AG04449 (cell line): ENCODE measurements at regions of chr6 and their contacts with region 1.

Region 1: GRCh38 chr6:44074439-44075136 is 52.7 kb downstream of the MRPL14 start:
- DNase-seq: no peak
- H3K4me3 ChIP-seq: no peak overlapping the region
- CTCF ChIP-seq: peak; percentile 92

Region 2: DNA sequence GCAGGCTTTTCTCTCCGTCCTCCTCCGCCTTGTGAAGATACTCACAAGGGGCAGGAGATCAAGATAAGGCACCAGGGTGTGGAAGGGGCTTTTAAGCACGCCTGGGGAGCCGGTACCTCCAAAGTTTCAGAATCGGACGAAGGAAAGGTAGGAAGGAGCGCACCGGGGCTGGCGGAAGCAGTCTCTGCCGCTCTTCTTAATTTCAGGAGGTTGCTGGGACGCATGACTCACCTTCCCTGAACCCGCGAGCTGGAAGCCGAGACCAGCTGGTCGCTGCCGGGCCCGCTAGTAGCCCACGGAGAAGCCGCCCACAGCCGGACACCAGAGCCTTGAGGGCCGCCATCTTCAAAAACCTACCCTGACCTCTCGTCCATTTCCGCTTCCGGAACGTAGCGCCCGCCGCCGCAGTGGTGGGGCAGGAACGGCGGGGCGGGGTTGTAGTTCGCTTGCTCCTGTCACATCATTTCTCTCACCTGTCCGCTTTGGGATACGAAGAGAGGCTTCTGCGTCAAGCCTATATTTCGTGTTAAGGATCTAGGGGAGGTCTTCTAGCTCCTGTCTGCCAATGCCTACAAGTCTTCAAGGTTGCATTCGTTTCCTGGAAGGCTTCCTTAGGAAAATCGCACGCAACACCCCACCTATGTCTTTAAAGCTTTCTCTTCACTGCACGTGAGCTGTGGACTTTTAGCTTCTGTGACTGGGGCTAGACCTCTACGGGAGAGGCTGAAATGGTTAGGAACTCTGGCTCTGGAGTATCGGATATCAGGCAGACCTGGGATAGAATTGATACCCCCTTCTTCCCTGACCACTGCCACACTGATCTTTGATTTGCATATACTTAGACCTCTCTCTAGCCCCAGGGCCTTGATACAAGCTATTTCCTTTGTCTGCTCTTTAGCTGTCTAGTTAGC is 386.9 kb before region 1 on chr6 and contains the start of gene MRPS18A:
- CTCF ChIA-PET with region 1: interaction called, 10 read pairs
- POLR2A ChIA-PET with region 1: no interaction called
- DNase-seq: no peak
- H3K4me3 ChIP-seq: peak within 1 kb of the TSS; percentile 92
- CTCF ChIP-seq: no peak

Region 3: DNA sequence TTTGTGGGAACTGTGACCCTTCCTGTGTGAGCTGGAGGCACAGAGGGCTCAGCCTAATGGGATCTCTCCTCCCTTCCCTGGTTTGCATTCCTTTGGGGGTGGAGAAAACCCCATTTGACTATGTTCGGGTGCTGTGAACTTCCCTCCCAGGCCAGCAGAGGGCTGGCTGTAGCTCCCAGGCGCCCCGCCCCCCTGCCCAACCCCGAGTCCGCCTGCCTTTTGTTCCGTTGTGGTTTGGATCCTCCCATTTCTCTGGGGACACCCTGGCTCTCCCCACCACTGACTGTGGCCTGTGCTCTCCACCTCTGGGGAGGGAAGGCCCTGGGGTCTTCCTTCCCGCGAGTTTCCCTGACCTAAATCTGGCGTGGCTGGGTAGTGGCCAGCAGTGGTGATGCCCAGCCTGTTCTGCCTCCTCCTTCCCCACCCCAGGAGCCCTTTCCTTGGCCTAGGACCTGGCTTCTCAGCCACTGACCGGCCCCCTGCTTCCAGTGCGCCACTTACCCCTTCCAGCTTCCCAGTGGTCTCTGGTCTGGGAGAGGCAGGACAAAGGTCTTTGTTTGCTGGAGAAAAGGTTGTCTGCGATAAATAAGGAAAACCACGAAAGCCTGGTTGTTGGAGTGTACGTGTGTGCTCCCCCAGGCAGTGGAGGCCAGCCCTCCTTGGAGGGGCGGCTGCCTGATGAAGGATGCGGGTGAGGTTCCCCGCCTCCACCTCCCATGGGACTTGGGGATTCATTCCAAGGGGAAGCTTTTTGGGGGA is 299.6 kb before region 1 on chr6:
- CTCF ChIA-PET with region 1: interaction called, 283 read pairs
- POLR2A ChIA-PET with region 1: interaction called, 26 read pairs
- DNase-seq: no peak
- H3K4me3 ChIP-seq: peak overlapping the region; percentile 98
- CTCF ChIP-seq: peak; percentile 89

Region 4: DNA sequence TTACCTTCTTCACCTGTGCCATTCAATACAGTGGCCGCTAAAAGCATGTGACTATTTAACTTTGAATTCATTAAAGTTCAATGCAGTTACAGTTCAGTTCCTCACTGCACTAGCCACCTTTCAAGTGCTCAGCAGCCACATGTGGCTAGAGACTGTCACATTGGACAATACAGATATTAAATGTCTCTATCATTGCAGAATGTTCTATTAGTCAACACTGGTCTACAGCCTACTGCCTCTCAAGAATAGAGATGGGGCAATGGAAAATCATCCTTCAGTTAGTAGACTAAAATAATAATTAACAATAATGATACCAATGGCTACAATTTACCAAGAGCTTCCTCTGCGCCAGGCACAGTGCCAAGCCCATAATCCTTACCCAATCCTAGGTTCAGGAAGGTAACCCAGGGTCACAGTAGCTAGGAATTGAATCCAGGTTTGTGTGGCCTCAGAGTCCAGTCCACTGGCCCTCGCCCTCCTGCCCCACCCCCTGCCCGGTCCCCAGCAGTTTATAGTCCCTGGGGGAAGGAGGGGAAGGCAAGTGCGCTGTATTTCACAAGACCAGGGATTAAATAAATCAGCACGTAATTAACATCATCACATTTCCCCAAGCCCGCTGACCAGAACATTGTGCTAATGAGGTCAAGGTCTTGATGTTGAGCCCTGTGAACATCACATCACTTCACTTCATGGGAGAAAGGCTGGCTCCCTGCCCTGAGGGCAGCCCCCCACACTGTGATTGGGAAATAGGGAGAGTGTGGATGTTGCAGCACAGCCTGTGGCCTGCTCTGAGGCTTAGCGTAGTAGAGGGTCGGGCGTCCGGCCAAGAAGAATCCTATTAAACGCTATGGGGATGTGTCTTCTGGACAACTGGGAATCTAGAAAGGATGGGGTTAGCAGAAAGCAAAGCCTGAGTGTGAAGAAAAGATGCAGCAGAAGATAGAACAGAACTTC is 157.4 kb before region 1 on chr6:
- CTCF ChIA-PET with region 1: interaction called, 10 read pairs
- POLR2A ChIA-PET with region 1: no interaction called
- DNase-seq: no peak
- H3K4me3 ChIP-seq: no peak overlapping the region
- CTCF ChIP-seq: no peak

Region 5: GRCh38 chr6:43972913-43973300 is 101.7 kb before region 1 on chr6:
- CTCF ChIA-PET with region 1: interaction called, 10 read pairs
- POLR2A ChIA-PET with region 1: no interaction called
- DNase-seq: peak; percentile 78
- H3K4me3 ChIP-seq: no peak overlapping the region
- CTCF ChIP-seq: no peak

Region 6: DNA sequence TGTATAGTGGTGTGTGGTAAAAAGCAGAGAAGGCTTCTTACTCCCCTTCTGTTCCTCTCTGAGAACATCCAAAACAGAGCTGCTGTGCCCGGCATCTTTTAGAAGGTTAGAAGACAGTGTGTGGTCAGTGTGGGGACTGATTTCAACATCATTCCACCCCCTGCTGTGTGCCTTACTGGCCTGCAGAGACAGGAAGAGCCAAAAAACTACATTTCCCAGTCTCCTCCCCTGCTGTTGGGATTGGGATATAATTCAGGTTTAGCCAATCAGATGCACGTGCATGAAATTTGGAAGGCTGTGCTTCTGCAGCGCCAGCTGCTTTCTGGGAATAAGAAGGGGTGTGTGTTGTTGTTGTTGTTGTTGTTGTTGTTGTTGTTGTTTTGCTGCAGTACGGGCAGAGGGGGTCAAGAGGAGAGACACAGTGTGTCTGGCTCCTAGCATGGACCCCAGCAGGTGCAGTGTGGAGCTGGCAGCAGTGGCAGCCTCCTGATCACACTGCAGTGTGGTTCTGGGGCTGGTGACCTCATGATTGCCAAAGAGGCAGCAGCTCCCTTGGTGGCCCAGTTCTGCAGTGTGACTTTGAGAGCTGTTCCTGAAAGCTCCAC is 22.1 kb before region 1 on chr6:
- CTCF ChIA-PET with region 1: interaction called, 17 read pairs
- POLR2A ChIA-PET with region 1: interaction called, 8 read pairs
- DNase-seq: no peak
- H3K4me3 ChIP-seq: no peak overlapping the region
- CTCF ChIP-seq: no peak

Region 7: GRCh38 chr6:44580901-44581300 is 506.3 kb after region 1 on chr6:
- CTCF ChIA-PET with region 1: no interaction called
- POLR2A ChIA-PET with region 1: no interaction called
- DNase-seq: peak; percentile 42
- H3K4me3 ChIP-seq: no peak overlapping the region
- CTCF ChIP-seq: no peak